ENCODE measurements at regions of chr22 and their contacts with region 1.

Region 1: DNA sequence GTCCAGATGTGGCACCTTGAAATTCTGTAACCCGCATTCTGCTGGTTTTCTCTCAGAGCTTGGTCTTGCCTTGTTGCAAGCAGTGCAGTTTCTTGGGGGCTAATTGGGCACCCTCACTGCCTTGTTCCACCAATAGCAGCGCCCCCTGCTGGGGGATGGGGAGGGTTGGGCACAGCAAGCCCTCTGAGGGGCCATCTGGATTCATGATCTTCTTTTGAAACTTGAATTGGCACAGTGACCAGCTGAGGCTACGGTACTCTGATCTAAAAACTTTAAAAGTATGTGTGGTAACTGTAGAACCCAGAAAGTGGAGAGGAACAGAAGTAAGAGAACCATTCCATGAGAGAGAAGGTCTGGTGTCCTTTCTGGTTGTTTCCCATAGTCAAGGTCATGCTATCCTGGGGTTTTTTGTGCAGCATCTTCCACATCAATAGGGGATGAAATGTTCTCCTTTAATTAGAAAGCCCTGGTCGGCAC is 64.2 kb downstream of the MED15 start:
- DNase-seq: no peak
- H3K4me3 ChIP-seq: no peak overlapping the region
- H3K27ac ChIP-seq: peak overlapping the region in 1 of 2 donors; percentile 13
- H3K4me1 ChIP-seq: peaks cover 8 to 32% of the 10 kb centered on the region in 2 donors
- H3K27me3 ChIP-seq: no peaks in the 10 kb centered on the region
- CTCF ChIP-seq: peak in 2 of 3 donors; percentile 18 to 28
- POLR2A ChIP-seq: no peak

Region 2: GRCh38 chr22:20509344-20510047 is 62.1 kb before region 1 on chr22:
- intact Hi-C with region 1: loop called (anchors 10 kb)
- DNase-seq: peak in 1 of 2 donors; percentile 73
- H3K4me3 ChIP-seq: peak overlapping the region; percentile 85 to 96 (median 90)
- H3K27ac ChIP-seq: peak overlapping the region; percentile 97 to 98
- H3K4me1 ChIP-seq: peaks cover 5 to 7% of the 10 kb centered on the region in 2 donors
- H3K27me3 ChIP-seq: no peaks in the 10 kb centered on the region
- CTCF ChIP-seq: no peak
- POLR2A ChIP-seq: no peak

Measured in breast epithelium (tissue), 4 donors.